Heart left ventricle (tissue), 16 donors: ENCODE measurements at regions of chr1 and their contacts with region 1.

Region 1: GRCh38 chr1:153572569-153573015 is 6.9 kb upstream of the S100A2 start:
- DNase-seq: peak; percentile 81 to 87 (median 86)
- ATAC-seq: peak; percentile 89 to 93 (median 92)
- H3K4me3 ChIP-seq: no peak overlapping the region
- H3K27ac ChIP-seq: peak overlapping the region in 11 of 12 donors; percentile 20 to 76 (median 41)
- H3K4me1 ChIP-seq: peaks cover 0 to 36% (median 18%) of the 10 kb centered on the region in 12 donors
- H3K27me3 ChIP-seq: no peaks in the 10 kb centered on the region
- CTCF ChIP-seq: peak; percentile 71 to 91 (median 82)
- POLR2A ChIP-seq: no peak

Region 2: GRCh38 chr1:153352523-153352922 is 220.1 kb before region 1 on chr1:
- intact Hi-C with region 1: loop called in 6 of 10 experiments (anchors 5 to 10 kb)
- DNase-seq: peak; percentile 52 to 73 (median 63)
- ATAC-seq: peak; percentile 63 to 88 (median 78)
- H3K4me3 ChIP-seq: no peak overlapping the region
- H3K27ac ChIP-seq: no peak overlapping the region
- H3K4me1 ChIP-seq: peaks cover 0 to 13% (median 0%) of the 10 kb centered on the region in 12 donors
- H3K27me3 ChIP-seq: peaks cover 0 to 38% (median 14%) of the 10 kb centered on the region in 9 donors
- CTCF ChIP-seq: peak; percentile 82 to 96 (median 92)
- POLR2A ChIP-seq: no peak

Region 3: DNA sequence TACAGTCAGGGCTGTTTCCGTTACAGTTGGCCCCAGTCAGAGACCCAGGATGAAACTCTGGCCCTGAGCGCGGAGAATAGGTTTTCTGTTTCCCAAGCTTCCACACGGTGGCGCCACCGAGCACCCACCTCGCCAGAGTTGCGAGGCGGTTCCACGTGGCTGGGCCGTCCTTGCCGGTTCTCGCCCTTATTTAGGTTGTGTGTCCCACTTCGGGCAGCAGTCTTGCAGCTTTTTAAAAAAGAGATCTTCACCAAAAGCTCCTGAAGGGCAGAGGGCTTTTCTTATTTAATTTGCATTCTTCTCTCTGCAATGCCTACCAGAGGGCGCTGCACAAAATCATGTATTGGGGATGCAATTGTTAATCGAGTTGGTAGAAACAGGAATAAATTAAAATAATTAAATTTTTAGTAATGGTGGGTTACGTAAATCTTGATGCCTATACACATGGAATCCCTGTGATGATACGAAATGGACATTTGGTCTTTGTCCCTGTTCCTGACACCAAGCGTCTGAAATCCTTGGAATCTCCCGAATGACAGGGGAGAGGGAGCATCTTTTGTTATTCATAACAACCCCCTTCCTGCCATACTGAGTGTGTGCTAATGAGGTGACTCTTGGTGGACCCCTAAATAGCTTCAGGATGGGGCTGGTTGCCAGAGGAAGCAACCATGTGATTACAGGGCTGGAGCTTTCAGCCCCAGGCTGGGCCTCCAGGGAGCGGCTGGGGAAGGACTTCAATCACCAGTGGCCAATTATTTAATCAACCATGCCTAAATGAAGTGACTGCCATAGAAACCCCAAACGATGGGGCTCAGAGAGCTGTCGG is 106.6 kb before region 1 on chr1:
- intact Hi-C with region 1: no loop called
- DNase-seq: peak; percentile 39 to 77 (median 56)
- ATAC-seq: peak; percentile 37 to 81 (median 60)
- H3K4me3 ChIP-seq: no peak overlapping the region
- H3K27ac ChIP-seq: peak overlapping the region in 1 of 12 donors; percentile 14
- H3K4me1 ChIP-seq: peaks cover 0 to 24% (median 12%) of the 10 kb centered on the region in 12 donors
- H3K27me3 ChIP-seq: no peaks in the 10 kb centered on the region
- CTCF ChIP-seq: peak; percentile 67 to 84 (median 76)
- POLR2A ChIP-seq: no peak

Region 4: DNA sequence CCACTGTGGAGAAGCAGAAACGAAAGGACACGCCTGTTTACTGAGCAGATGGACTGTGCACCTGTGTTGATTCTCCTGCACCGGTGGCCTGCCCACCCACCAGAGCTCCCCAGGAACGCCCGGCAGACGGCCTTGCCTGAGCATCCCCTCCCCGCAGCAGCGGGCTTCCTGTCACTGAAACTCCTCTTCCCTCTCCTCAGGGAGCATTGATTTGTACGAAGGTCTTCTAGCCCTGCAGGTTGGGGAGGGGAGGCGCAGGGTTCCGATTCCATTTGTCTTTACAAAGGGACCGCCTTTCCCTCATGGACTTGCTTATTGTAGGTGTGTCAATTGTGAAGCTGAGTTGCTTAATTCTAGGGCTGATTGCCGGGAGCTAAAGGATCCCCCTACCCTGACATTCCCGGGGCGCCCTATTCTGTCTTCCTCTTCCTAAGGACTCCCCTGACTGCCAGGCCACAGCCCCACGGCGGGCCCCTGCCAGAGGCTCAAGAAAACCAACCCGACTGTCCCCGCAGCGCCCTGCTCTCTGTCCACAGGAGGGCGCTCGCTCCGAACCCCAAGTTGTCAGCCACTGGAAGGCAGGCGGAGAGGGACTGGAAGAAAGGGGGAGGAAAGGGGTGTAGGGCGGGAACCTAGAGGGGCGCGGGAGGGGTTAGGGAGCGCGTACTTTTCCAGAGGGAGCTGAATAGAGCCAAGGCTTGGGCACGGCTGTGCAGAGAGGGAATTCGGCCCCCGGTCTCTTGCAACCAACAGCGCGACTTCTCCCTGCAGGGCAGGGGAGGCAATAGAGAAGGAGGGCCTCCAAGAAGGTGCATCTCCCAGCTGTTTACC is 39.6 kb before region 1 on chr1:
- intact Hi-C with region 1: loop called in 9 of 10 experiments (anchors 1 to 5 kb)
- DNase-seq: peak; percentile 83 to 91 (median 84)
- ATAC-seq: peak; percentile 35 to 70 (median 52)
- H3K4me3 ChIP-seq: peak overlapping the region in 10 of 12 donors; percentile 14 to 97 (median 90)
- H3K27ac ChIP-seq: peak overlapping the region in 11 of 12 donors; percentile 3 to 100 (median 98)
- H3K4me1 ChIP-seq: peaks cover 0 to 54% (median 28%) of the 10 kb centered on the region in 12 donors
- H3K27me3 ChIP-seq: no peaks in the 10 kb centered on the region
- CTCF ChIP-seq: peak; percentile 63 to 89 (median 80)
- POLR2A ChIP-seq: no peak

Region 5: GRCh38 chr1:153658400-153659174 is 86.0 kb after region 1 on chr1 and contains the start of gene SNAPIN:
- intact Hi-C with region 1: loop called in 4 of 10 experiments (anchors 5 to 10 kb)
- DNase-seq: peak; percentile 93 to 95 (median 95)
- ATAC-seq: peak; percentile 94 to 98 (median 98)
- H3K4me3 ChIP-seq: peak within 1 kb of the TSS; percentile 48 to 96 (median 82)
- H3K27ac ChIP-seq: peak within 1 kb of the TSS; percentile 88 to 99 (median 96)
- H3K4me1 ChIP-seq: peaks cover 0 to 18% (median 12%) of the 10 kb centered on the region in 12 donors
- H3K27me3 ChIP-seq: no peaks in the 10 kb centered on the region
- CTCF ChIP-seq: peak in 7 of 12 donors; percentile 10 to 46 (median 29)
- POLR2A ChIP-seq: peak in 1 of 2 donors; percentile 70
- total RNA-seq, gene SNAPIN: 53.7 to 88.7 (median 70.8) TPM

Region 6: DNA sequence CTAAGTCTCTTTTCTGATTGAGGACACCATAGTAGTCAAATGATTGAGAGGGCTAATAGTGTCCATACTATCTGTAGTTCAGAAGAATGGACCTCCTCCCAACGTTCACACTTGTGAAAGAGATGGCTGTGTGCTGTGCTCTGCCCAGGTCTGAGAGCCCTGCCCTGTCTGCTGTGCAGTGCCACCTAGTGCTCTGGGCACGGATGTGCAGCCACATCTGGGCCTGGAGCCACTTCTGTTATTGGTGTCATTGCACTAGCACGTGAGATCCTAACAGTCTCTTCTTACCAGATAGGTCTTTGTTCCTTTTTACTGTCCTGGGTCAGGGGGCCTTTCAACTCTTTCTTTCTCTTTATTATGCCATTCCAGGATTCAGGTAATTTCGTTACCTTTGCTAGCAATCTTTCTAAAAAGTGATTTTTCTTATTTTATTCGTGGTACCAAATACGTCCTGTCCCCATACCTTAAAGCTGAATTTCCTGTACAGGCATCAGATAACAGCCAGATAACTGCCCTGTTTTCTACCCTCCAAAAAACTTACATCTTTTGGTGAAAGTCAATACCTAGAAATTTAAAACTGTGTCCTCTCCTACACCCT is 176.9 kb after region 1 on chr1:
- intact Hi-C with region 1: loop called in 2 of 10 experiments (anchors 1 to 10 kb)
- DNase-seq: peak; percentile 81 to 91 (median 89)
- ATAC-seq: peak; percentile 87 to 94 (median 94)
- H3K4me3 ChIP-seq: no peak overlapping the region
- H3K27ac ChIP-seq: peak overlapping the region; percentile 33 to 78 (median 71)
- H3K4me1 ChIP-seq: peaks cover 14 to 62% (median 39%) of the 10 kb centered on the region in 12 donors
- H3K27me3 ChIP-seq: no peaks in the 10 kb centered on the region
- CTCF ChIP-seq: peak; percentile 89 to 98 (median 94)
- POLR2A ChIP-seq: no peak

Region 7: GRCh38 chr1:154213274-154213673 is 640.7 kb after region 1 on chr1:
- intact Hi-C with region 1: no loop called
- DNase-seq: no peak
- ATAC-seq: no peak
- H3K4me3 ChIP-seq: no peak overlapping the region
- H3K27ac ChIP-seq: peak overlapping the region in 1 of 12 donors; percentile 74
- H3K4me1 ChIP-seq: peaks cover 0 to 18% (median 10%) of the 10 kb centered on the region in 12 donors
- H3K27me3 ChIP-seq: no peaks in the 10 kb centered on the region
- CTCF ChIP-seq: no peak
- POLR2A ChIP-seq: no peak